ENCODE measurements at regions of chr5 and their contacts with region 1.

Region 1: DNA sequence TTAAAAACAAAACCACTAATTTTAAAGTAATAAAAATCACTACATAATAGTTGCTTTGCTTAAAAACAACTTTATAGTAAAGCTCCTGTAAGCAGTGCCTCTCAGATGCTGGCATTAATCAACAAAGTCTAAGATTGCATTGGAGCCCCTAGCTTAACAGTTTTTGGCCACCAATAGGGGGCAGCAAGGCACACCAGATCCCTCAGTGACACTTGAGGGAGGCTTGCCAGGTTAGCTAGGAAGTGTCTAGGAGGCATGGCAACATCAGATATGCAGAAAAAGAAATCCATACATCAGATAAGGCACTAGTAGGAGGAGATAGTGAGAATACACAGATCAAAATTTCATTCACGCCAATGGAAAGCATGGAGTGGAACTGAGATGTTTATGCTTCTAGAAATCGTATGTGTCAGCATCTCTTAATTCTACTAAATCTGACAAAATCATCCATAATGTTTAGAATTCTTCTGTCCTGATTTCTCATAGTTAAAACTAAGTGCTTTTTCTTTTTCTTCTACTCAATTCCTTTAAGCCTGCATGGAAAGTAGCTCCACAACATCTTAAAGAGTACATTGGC is 73.6 kb upstream of the PAM start:
- DNase-seq: peak; percentile 30 to 43 (median 34)
- H3K4me3 ChIP-seq: no peak overlapping the region
- H3K4me3 Mint-ChIP-seq: no peak overlapping the region
- H3K27ac ChIP-seq: no peak overlapping the region
- H3K27ac Mint-ChIP-seq: peak overlapping the region in 2 of 7 donors; percentile 2 to 21
- H3K4me1 ChIP-seq: no peaks in the 10 kb centered on the region
- H3K4me1 Mint-ChIP-seq: peaks cover 0 to 1% (median 0%) of the 10 kb centered on the region in 4 donors
- H3K27me3 ChIP-seq: no peaks in the 10 kb centered on the region
- H3K27me3 Mint-ChIP-seq: peaks cover 0 to 2% of the 10 kb centered on the region in 2 donors

Region 2: GRCh38 chr5:102731704-102732103 is 50.2 kb after region 1 on chr5:
- CTCF ChIA-PET with region 1: no interaction called
- POLR2A ChIA-PET with region 1: no interaction called
- intact Hi-C with region 1: no loop called
- DNase-seq: no peak
- H3K4me3 ChIP-seq: no peak overlapping the region
- H3K4me3 Mint-ChIP-seq: no peak overlapping the region
- H3K27ac ChIP-seq: no peak overlapping the region
- H3K27ac Mint-ChIP-seq: no peak overlapping the region
- H3K4me1 ChIP-seq: no peaks in the 10 kb centered on the region
- H3K4me1 Mint-ChIP-seq: no peaks in the 10 kb centered on the region
- H3K27me3 ChIP-seq: no peaks in the 10 kb centered on the region
- H3K27me3 Mint-ChIP-seq: peaks cover 2 to 7% of the 10 kb centered on the region in 2 donors

Region 3: DNA sequence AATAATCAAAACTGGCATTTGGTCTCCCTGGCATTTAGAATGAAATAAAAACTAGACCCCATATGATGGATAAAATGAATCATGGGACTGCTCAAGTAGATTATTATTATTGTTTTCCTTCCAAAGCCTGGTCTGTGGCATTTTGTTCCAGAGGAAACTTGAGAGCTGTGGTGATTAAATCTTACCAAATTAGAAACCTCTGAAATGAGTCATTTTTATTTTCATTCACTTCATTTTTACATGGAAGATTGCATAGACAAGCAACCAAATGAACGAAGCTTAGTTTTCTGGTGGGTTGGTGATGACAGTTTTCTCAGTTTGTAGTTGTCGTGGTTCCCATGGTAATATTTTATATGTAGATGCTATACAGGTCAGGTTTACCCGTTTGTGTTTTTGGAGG is 97.0 kb after region 1 on chr5:
- CTCF ChIA-PET with region 1: no interaction called
- POLR2A ChIA-PET with region 1: no interaction called
- intact Hi-C with region 1: loop called (anchors 2 kb)
- DNase-seq: no peak
- H3K4me3 ChIP-seq: no peak overlapping the region
- H3K4me3 Mint-ChIP-seq: no peak overlapping the region
- H3K27ac ChIP-seq: no peak overlapping the region
- H3K27ac Mint-ChIP-seq: no peak overlapping the region
- H3K4me1 ChIP-seq: peaks cover 10% of the 10 kb centered on the region
- H3K4me1 Mint-ChIP-seq: peaks cover 17 to 32% (median 23%) of the 10 kb centered on the region in 4 donors
- H3K27me3 ChIP-seq: no peaks in the 10 kb centered on the region
- H3K27me3 Mint-ChIP-seq: no peaks in the 10 kb centered on the region

Region 4: DNA sequence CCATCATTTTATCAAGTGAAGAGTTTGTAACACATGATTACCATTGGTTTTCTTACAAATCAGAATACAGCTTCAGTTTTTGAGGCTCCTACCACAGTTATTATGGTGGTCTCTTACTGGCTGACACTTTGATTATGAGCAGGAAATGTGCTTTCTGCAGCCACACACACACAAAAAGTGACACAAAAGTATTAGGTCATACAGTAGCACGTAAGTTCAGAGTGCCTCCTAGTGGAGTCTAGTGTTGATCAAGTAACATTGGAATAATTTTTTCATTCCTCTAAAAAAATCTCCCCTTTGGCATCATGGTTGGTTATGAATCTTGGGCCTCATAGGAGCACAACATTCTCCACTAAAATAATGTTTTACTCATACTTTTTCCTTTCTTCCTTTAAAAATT is 111.2 kb after region 1 on chr5:
- CTCF ChIA-PET with region 1: interaction called, 10 read pairs
- POLR2A ChIA-PET with region 1: no interaction called
- intact Hi-C with region 1: no loop called
- DNase-seq: peak in 1 of 5 donors; percentile 4
- H3K4me3 ChIP-seq: no peak overlapping the region
- H3K4me3 Mint-ChIP-seq: no peak overlapping the region
- H3K27ac ChIP-seq: no peak overlapping the region
- H3K27ac Mint-ChIP-seq: no peak overlapping the region
- H3K4me1 ChIP-seq: no peaks in the 10 kb centered on the region
- H3K4me1 Mint-ChIP-seq: peaks cover 4 to 13% (median 9%) of the 10 kb centered on the region in 4 donors
- H3K27me3 ChIP-seq: no peaks in the 10 kb centered on the region
- H3K27me3 Mint-ChIP-seq: no peaks in the 10 kb centered on the region

Region 5: DNA sequence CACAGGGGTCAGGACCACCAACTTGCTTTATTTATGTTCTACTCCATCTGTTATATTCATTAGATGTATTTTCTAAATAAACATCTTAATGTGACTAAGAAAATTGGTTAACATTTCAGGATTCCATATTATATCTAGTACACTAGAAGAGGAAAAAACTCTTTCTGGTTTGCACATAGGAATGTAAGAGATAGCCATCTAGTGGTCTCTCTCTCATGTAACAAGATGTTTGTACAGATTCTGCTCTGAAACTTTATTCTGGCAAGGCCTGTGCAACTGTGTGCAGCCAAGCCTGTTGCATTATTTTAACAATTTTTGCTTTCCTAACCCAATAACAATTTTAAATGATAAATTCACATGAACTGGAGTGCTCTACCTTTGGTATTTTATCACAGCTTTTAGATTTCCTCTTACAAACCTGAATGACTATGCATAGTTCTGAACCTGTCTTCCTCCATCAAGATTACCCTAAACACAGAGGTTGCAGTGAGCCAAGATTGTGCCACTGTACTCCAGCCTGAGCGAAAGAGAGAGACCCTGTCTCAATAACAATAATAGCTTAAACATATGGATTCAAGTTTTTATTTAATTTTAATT is 290.3 kb after region 1 on chr5:
- CTCF ChIA-PET with region 1: interaction called, 12 read pairs
- POLR2A ChIA-PET with region 1: no interaction called
- intact Hi-C with region 1: loop called (anchors 1 kb)
- DNase-seq: no peak
- H3K4me3 ChIP-seq: no peak overlapping the region
- H3K4me3 Mint-ChIP-seq: no peak overlapping the region
- H3K27ac ChIP-seq: no peak overlapping the region
- H3K27ac Mint-ChIP-seq: no peak overlapping the region
- H3K4me1 ChIP-seq: no peaks in the 10 kb centered on the region
- H3K4me1 Mint-ChIP-seq: peaks cover 0 to 1% (median 0%) of the 10 kb centered on the region in 4 donors
- H3K27me3 ChIP-seq: no peaks in the 10 kb centered on the region
- H3K27me3 Mint-ChIP-seq: no peaks in the 10 kb centered on the region

Region 6: GRCh38 chr5:103041071-103041676 is 359.7 kb after region 1 on chr5:
- CTCF ChIA-PET with region 1: interaction called, 4 read pairs
- POLR2A ChIA-PET with region 1: no interaction called
- intact Hi-C with region 1: loop called (anchors 2 kb)
- DNase-seq: peak in 1 of 5 donors; percentile 9
- H3K4me3 ChIP-seq: no peak overlapping the region
- H3K4me3 Mint-ChIP-seq: no peak overlapping the region
- H3K27ac ChIP-seq: no peak overlapping the region
- H3K27ac Mint-ChIP-seq: no peak overlapping the region
- H3K4me1 ChIP-seq: no peaks in the 10 kb centered on the region
- H3K4me1 Mint-ChIP-seq: no peaks in the 10 kb centered on the region
- H3K27me3 ChIP-seq: no peaks in the 10 kb centered on the region
- H3K27me3 Mint-ChIP-seq: peaks cover 3 to 4% of the 10 kb centered on the region in 2 donors

Region 7: DNA sequence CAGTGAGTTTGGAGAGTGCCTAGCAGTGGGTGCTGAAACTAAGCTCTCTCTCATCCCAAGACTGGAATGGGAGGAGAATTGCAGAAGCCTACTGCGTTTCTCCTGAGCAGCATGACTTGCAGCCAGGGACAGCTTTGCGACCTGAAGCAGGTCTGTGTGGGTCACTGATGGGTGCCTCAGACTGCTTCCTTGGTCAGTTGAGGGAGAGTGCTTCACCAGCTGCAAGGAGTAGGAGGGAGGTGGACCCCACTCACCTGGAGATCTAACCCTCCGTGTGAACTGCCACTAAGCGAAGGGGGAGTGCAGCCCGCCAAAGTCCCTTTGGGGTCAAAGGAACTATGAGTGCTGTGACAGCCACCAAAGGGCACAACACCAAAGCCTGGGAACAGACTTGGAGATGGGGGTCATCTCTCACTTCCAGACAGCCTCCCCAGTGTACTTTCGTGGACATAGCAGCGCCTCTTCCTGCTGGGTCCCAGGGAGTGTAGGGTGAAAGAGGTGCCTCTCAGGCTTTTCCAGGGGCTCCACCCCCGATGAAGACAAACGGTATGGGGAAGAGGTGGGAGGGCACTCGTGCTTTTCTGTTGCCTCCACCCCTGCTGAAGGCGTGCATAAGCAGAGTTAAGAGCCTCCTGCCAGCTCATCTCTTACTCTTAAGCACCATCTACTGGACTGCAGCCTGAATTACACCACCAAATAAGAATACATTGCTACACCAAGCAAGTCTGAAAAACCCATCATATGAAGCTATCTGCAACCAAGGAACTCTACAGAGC is 542.8 kb after region 1 on chr5:
- CTCF ChIA-PET with region 1: interaction called, 13 read pairs
- POLR2A ChIA-PET with region 1: no interaction called
- intact Hi-C with region 1: no loop called
- DNase-seq: peak; percentile 41 to 56 (median 50)
- H3K4me3 ChIP-seq: no peak overlapping the region
- H3K4me3 Mint-ChIP-seq: no peak overlapping the region
- H3K27ac ChIP-seq: no peak overlapping the region
- H3K27ac Mint-ChIP-seq: no peak overlapping the region
- H3K4me1 ChIP-seq: no peaks in the 10 kb centered on the region
- H3K4me1 Mint-ChIP-seq: no peaks in the 10 kb centered on the region
- H3K27me3 ChIP-seq: no peaks in the 10 kb centered on the region
- H3K27me3 Mint-ChIP-seq: peaks cover 18 to 27% of the 10 kb centered on the region in 2 donors